Cardiac septum (tissue), 1 donor: ENCODE measurements at regions of chr11 and their contacts with region 1.

Region 1: GRCh38 chr11:7577291-7578190 is 63.7 kb downstream of the PPFIBP2 start:
- DNase-seq: no peak

Region 2: DNA sequence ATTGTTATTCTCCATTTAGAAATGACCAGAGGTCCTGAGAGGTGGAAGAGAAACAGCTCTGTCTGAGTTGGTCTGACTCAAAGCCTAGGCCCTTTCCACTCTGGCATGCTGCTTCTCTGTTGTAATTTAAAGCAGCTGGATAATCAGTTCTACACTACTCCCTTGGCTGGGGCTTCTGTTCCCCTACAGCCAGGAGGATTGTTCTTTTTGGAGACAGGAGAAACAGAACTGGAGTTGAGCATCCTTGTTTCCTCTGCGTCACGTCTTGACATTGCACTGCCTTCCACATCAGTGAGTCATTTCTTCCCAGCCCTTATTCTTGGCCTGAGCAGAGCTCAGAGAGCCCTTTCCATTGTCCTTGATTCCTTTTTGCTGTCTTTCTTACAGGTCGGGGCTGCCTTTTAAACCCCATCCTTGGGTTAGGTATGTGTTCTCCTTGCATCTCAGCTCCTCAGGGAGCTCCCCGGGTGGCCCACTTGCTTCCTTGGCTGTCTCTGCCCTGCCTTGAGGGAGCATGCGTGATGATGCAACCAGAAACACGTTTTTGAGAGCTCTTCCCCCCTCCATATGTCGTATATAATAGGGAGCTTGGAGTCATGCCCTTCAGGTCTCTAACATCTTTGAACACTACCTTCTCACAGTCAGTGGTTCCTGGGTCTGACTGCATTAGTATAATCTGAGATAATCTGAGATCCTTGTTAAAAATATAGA is 60.1 kb after region 1 on chr11:
- intact Hi-C with region 1: loop called (anchors 5 kb)
- DNase-seq: no peak

Region 3: DNA sequence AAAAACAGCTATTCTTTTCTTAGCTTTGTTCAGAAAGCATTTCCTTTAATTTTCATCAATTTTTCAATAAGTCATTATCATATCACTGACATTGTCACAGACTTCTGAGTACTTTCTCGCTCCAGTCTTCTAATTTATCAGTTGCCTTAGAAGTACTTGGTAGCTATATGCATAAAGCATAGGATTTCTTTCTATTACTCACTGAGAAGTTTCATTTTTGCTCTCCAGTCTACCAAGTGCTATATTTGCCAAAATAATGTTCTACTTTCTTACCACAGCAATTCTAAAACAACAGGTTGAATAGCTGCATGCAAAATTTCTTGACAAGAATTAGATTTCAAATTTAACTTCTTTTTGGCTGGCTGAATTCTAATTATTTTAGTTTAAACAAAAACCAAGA is 900.1 kb after region 1 on chr11:
- intact Hi-C with region 1: no loop called
- DNase-seq: no peak